ENCODE measurements at regions of chr2 and their contacts with region 1.

Region 1: GRCh38 chr2:1769703-1770422 is 25.5 kb upstream of the PXDN start:
- DNase-seq: peak; percentile 83 to 84
- H3K4me3 ChIP-seq: no peak overlapping the region
- H3K4me3 Mint-ChIP-seq: no peak overlapping the region
- H3K27ac Mint-ChIP-seq: no peak overlapping the region
- H3K4me1 ChIP-seq: peaks cover 31% of the 10 kb centered on the region
- H3K4me1 Mint-ChIP-seq: peaks cover 10% of the 10 kb centered on the region
- H3K27me3 ChIP-seq: no peaks in the 10 kb centered on the region
- H3K27me3 Mint-ChIP-seq: no peaks in the 10 kb centered on the region
- CTCF ChIP-seq: peak; percentile 75 to 80

Region 2: DNA sequence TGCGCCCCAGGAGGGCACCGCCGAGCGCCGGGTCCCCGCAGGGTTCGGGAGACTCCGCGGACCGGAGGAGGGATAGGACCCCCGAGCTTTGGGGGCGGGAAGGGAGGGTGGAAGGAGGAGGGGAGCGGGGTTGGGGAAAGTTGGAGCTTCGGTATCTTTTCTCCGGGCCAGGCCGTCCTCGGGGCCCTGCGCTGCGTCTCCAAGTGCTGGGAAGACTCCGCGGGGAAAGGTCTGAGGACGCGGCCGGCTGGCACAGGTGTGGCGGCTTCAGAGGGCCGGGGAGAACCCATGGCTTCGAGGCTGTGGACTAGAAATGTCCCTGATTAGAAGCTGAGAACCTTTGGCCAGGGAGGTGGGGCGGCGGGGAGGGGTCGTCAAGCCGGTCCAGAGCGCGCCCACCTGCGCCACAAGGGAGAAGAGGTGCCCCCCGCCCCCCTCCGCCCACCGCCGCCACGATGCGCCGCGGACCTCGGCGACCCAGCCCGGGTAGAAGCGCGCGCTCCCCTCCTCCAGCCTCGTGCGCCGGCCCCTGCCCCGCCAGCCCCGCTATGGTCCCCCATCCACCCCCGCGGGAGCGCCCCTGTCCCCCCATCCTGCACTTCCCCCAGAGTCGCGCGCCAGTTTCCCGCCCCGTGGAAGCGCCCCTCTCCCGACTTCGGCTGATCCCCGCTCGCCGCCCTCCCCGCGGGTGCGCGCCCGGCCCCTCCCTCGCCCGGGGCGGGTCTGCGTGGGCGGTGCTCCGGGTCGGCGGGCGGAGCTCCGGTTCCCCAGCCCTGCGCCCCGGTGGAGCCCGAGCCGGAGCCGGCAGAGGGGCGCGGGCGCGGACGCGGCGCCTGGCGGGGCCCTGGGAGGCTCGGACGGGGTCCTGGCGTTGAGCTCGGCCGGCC is 819.5 kb before region 1 on chr2 and contains the start of gene SNTG2:
- CTCF ChIA-PET with region 1: no interaction called
- POLR2A ChIA-PET with region 1: no interaction called
- intact Hi-C with region 1: loop called (anchors 10 kb)
- DNase-seq: no peak
- H3K4me3 ChIP-seq: no peak within 1 kb of the TSS
- H3K4me3 Mint-ChIP-seq: no peak within 1 kb of the TSS
- H3K27ac Mint-ChIP-seq: no peak within 1 kb of the TSS
- H3K4me1 ChIP-seq: peaks cover 6% of the 10 kb centered on the region; the same call in 1 of the 2 replicates
- H3K4me1 Mint-ChIP-seq: no peaks in the 10 kb centered on the region
- H3K27me3 ChIP-seq: no peaks in the 10 kb centered on the region
- H3K27me3 Mint-ChIP-seq: no peaks in the 10 kb centered on the region
- CTCF ChIP-seq: no peak
- total RNA-seq, gene SNTG2: not detected in 2 replicates

Region 3: GRCh38 chr2:1553671-1554295 is 216.1 kb before region 1 on chr2:
- CTCF ChIA-PET with region 1: interaction called, 7 read pairs
- POLR2A ChIA-PET with region 1: no interaction called
- intact Hi-C with region 1: loop called (anchors 1 kb)
- DNase-seq: peak; percentile 65 to 67
- H3K4me3 ChIP-seq: no peak overlapping the region
- H3K4me3 Mint-ChIP-seq: peak overlapping the region; percentile 41
- H3K27ac Mint-ChIP-seq: peak overlapping the region; percentile 85
- H3K4me1 ChIP-seq: peaks cover 42% of the 10 kb centered on the region
- H3K4me1 Mint-ChIP-seq: peaks cover 12% of the 10 kb centered on the region
- H3K27me3 ChIP-seq: no peaks in the 10 kb centered on the region
- H3K27me3 Mint-ChIP-seq: no peaks in the 10 kb centered on the region
- CTCF ChIP-seq: peak in 1 of 2 experiments; percentile 28

Region 4: DNA sequence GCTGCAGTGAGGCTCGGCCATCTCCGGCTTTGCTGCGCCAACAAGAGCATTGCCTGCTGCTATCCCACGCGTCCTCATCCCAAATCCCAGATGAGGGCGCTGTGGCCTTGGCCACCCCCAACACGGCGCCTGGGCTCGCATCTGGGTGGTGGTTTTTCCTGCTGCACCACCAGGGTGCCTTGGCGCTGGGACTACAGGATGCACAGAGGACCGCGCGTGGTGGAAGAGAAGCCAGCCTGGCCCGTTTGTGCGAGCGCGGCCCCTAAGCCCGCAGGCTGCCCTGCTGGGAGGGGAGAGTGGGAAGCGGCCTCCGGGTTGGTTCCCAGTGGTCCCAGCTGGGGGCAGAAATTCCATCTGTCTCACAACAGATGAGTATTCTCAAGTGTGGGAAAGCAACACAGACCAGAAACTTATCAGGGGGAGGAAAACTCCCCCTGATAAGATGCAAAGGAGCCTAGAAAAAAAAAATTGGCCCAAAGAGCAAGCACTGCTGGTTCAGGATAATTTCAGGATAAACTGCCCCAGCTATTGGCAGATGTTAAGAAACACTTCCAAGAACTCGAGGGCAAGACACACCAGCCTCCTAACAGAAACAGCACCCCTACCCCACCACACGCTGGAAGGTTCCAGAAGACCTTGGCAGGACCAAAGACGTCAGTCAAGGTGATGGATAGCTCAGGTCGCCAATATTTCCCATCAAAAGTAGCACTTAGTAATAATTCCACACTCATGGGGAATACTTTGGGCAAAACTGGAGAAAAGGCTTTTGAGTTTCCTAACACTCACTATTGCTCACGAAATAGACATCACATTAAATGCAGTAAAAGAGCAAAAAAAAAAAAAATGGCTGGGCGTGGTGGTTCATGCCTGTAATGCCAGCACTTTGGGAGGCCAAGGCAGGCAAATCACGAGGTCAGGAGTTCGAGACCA is 177.6 kb before region 1 on chr2:
- CTCF ChIA-PET with region 1: interaction called, 5 read pairs
- POLR2A ChIA-PET with region 1: no interaction called
- intact Hi-C with region 1: loop called (anchors 2 kb)
- DNase-seq: peak in 1 of 2 experiments; percentile 34
- H3K4me3 ChIP-seq: no peak overlapping the region
- H3K4me3 Mint-ChIP-seq: no peak overlapping the region
- H3K27ac Mint-ChIP-seq: no peak overlapping the region
- H3K4me1 ChIP-seq: no peaks in the 10 kb centered on the region
- H3K4me1 Mint-ChIP-seq: no peaks in the 10 kb centered on the region
- H3K27me3 ChIP-seq: no peaks in the 10 kb centered on the region
- H3K27me3 Mint-ChIP-seq: no peaks in the 10 kb centered on the region
- CTCF ChIP-seq: peak in 1 of 2 experiments; percentile 6

Region 5: DNA sequence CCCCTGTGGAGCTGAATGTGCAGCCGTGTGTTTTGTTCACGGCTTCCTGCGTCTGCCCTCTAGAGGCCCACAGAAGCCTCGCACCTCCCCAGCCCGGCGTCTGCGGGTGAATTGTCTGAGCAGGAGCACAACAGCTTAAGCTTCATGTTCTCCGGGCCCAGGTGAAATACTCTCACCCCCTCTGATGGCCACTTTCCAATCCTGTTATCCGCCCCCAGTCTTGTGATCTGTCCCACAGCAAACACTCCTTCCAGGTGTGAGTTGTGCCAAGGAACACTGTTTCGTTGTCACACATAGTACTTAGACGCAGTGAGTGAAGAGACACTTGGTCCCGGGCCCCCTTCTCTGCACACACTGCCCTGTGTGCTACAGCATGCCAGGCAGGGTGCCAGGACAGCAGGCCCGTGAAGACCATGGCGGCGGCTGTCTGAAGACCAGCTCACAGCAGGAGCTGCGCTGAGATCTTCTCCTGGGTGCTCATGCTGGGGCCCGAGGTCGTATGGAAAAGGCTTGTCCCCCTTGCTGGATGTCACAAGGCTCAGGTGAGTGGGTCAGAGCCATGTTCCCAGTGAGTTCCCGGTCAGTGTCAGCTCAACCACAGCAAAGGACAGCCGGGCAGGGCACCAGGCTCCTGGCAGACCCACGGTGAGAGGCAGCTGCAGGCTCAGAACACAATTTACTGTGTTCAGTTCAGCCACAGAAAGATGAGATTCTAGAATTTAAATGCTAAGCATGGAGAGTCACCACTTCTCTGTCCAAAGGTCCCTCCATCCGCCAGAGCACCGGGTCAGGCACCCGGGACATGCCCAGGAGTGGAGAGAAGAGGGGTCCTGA is 18.7 kb before region 1 on chr2:
- CTCF ChIA-PET with region 1: interaction called, 15 read pairs
- POLR2A ChIA-PET with region 1: no interaction called
- intact Hi-C with region 1: no loop called
- DNase-seq: peak; percentile 55 to 67
- H3K4me3 ChIP-seq: no peak overlapping the region
- H3K4me3 Mint-ChIP-seq: no peak overlapping the region
- H3K27ac Mint-ChIP-seq: no peak overlapping the region
- H3K4me1 ChIP-seq: no peaks in the 10 kb centered on the region
- H3K4me1 Mint-ChIP-seq: no peaks in the 10 kb centered on the region
- H3K27me3 ChIP-seq: no peaks in the 10 kb centered on the region
- H3K27me3 Mint-ChIP-seq: peaks cover 6% of the 10 kb centered on the region
- CTCF ChIP-seq: peak; percentile 78 to 81

Region 6: GRCh38 chr2:1817256-1818051 is 47.6 kb after region 1 on chr2:
- CTCF ChIA-PET with region 1: interaction called, 3 read pairs
- POLR2A ChIA-PET with region 1: no interaction called
- intact Hi-C with region 1: loop called (anchors 5 kb)
- DNase-seq: peak; percentile 62 to 80
- H3K4me3 ChIP-seq: no peak overlapping the region
- H3K4me3 Mint-ChIP-seq: no peak overlapping the region
- H3K27ac Mint-ChIP-seq: no peak overlapping the region
- H3K4me1 ChIP-seq: no peaks in the 10 kb centered on the region; the same call in 1 of the 2 replicates
- H3K4me1 Mint-ChIP-seq: no peaks in the 10 kb centered on the region
- H3K27me3 ChIP-seq: no peaks in the 10 kb centered on the region
- H3K27me3 Mint-ChIP-seq: peaks cover 14% of the 10 kb centered on the region
- CTCF ChIP-seq: peak; percentile 93 to 95

Region 7: GRCh38 chr2:2083113-2083758 is 313.4 kb after region 1 on chr2:
- CTCF ChIA-PET with region 1: no interaction called
- POLR2A ChIA-PET with region 1: no interaction called
- intact Hi-C with region 1: no loop called
- DNase-seq: peak in 1 of 2 experiments; percentile 10
- H3K4me3 ChIP-seq: no peak overlapping the region
- H3K4me3 Mint-ChIP-seq: no peak overlapping the region
- H3K27ac Mint-ChIP-seq: no peak overlapping the region
- H3K4me1 ChIP-seq: no peaks in the 10 kb centered on the region
- H3K4me1 Mint-ChIP-seq: no peaks in the 10 kb centered on the region
- H3K27me3 ChIP-seq: no peaks in the 10 kb centered on the region; the same call in 1 of the 2 replicates
- H3K27me3 Mint-ChIP-seq: no peaks in the 10 kb centered on the region
- CTCF ChIP-seq: no peak

Region 8: GRCh38 chr2:2229626-2230432 is 460.0 kb after region 1 on chr2:
- CTCF ChIA-PET with region 1: no interaction called
- POLR2A ChIA-PET with region 1: no interaction called
- intact Hi-C with region 1: no loop called
- DNase-seq: no peak
- H3K4me3 ChIP-seq: no peak overlapping the region
- H3K4me3 Mint-ChIP-seq: no peak overlapping the region
- H3K27ac Mint-ChIP-seq: no peak overlapping the region
- H3K4me1 ChIP-seq: no peaks in the 10 kb centered on the region
- H3K4me1 Mint-ChIP-seq: no peaks in the 10 kb centered on the region
- H3K27me3 ChIP-seq: no peaks in the 10 kb centered on the region
- H3K27me3 Mint-ChIP-seq: peaks cover 10% of the 10 kb centered on the region
- CTCF ChIP-seq: no peak